GM12878 (cell line): ENCODE measurements at regions of chr3 and their contacts with region 1.

Region 1: DNA sequence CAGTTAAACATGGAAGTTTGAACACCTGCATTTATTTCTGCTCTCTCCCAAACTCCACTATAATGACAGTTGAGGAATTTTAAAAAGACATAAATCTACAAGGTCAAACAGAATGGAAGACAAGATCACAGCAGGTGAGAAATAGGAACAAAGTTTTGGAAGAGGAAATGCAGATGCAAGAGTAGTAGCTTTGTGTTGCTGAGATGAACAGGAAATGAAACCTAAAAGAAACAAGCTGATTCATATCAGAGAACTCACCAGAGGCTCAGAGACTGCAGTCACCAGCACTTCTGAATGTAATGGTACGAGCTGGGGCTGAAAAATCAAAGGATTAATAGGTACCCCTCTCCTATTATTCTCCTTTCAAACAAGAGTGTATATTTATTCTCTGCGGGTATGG is 459.9 kb downstream of the RAP2B start:
- DNase-seq: peak; percentile 34
- ATAC-seq: peak; percentile 89
- H3K4me3 ChIP-seq: no peak overlapping the region
- H3K27ac ChIP-seq: no peak overlapping the region
- H3K4me1 ChIP-seq: peaks cover 7% of the 10 kb centered on the region
- H3K27me3 ChIP-seq: no peaks in the 10 kb centered on the region
- CTCF ChIP-seq: no peak
- EP300 ChIP-seq: no peak
- POLR2A ChIP-seq: no peak
- RAD21 ChIP-seq: no peak

Region 2: GRCh38 chr3:153970741-153971347 is 348.9 kb after region 1 on chr3:
- CTCF ChIA-PET with region 1: no interaction called
- POLR2A ChIA-PET with region 1: no interaction called
- RAD21 ChIA-PET with region 1: no interaction called
- SMC1A ChIA-PET with region 1: no interaction called
- in situ Hi-C with region 1: no loop called
- intact Hi-C with region 1: loop called (anchors 10 kb)
- DNase-seq: no peak
- ATAC-seq: peak; percentile 27; the same call in 2 of the 3 replicates
- H3K4me3 ChIP-seq: no peak overlapping the region
- H3K27ac ChIP-seq: no peak overlapping the region
- H3K4me1 ChIP-seq: peaks cover 37% of the 10 kb centered on the region
- H3K27me3 ChIP-seq: no peaks in the 10 kb centered on the region
- CTCF ChIP-seq: peak; percentile 41 to 63 (median 49)
- EP300 ChIP-seq: no peak
- POLR2A ChIP-seq: no peak
- RAD21 ChIP-seq: peak; percentile 60